Activated naive CD4-positive, alpha-beta T cell treated with anti-CD3 and anti-CD28 coated beads, Interleukin-2, amount 10 ng/mL, durations not matched to agents 7 days and 5 days (primary cell): ENCODE measurements at regions of chr6 and their contacts with region 1.

Region 1: DNA sequence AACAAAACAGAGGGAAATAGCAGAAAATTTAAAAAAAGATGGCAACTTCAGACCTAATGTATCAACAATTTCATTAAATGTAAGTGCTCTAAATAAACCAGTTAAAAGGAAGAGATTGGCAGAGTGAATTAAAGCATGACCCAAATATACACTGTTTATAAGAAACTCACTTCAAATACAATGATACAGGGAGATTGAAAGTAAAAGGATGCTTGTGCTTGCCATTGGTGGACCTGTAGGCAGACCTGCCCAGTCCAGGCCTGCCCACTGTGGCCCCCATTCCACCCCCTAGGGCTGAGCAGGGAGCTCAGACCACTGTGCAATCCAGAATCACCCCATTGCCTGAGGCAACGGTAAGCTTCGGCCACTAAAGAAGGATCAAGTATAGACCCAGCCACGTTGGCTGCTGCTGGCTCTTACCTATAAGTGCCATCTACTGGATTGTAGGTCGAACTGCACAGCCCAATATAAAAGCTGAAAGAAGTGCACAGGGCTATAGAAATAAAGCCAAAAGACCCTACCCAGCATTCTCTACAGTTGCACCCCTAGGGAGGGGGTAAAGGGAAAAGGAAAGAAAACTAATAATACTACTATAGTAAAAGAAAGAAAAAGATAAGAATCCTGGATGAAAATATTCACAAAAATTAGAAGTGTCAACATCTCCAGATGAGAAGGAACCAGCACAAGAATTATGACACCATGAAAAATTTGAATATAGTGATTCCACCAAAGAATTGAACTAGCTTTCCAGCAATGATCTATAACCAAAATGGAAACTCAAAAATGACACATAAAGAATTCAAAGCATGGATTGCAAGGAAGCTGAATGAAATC is 36.1 kb downstream of the PSMB1 start:
- DNase-seq: peak; percentile 52
- H3K4me3 Mint-ChIP-seq: peak overlapping the region; percentile 8
- H3K27ac Mint-ChIP-seq: no peak overlapping the region
- H3K4me1 Mint-ChIP-seq: peaks cover 4% of the 10 kb centered on the region
- H3K27me3 Mint-ChIP-seq: peaks cover 28% of the 10 kb centered on the region

Region 2: DNA sequence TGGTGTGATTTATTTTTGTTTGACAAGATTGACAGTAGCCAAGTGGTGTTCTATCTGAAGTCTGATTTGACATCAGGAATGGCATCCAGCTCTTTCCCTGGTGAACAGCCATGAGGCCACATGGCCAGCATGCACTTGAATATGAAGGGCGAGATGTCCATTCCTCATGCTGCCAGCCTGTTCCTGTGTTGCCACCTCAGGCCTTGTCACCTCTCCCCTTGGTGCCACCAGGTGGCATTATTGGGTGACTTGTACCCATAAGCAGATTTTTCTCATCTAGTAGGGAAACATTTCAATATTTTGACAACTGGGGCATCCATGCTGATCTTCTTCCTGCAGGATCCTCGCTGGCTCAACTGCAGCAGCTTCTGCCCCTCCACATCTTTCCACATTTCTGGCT is 566.4 kb before region 1 on chr6:
- CTCF ChIA-PET with region 1: interaction called, 19 read pairs
- DNase-seq: peak; percentile 55
- H3K4me3 Mint-ChIP-seq: no peak overlapping the region
- H3K27ac Mint-ChIP-seq: no peak overlapping the region
- H3K4me1 Mint-ChIP-seq: peaks cover 4% of the 10 kb centered on the region
- H3K27me3 Mint-ChIP-seq: peaks cover 12% of the 10 kb centered on the region

Region 3: DNA sequence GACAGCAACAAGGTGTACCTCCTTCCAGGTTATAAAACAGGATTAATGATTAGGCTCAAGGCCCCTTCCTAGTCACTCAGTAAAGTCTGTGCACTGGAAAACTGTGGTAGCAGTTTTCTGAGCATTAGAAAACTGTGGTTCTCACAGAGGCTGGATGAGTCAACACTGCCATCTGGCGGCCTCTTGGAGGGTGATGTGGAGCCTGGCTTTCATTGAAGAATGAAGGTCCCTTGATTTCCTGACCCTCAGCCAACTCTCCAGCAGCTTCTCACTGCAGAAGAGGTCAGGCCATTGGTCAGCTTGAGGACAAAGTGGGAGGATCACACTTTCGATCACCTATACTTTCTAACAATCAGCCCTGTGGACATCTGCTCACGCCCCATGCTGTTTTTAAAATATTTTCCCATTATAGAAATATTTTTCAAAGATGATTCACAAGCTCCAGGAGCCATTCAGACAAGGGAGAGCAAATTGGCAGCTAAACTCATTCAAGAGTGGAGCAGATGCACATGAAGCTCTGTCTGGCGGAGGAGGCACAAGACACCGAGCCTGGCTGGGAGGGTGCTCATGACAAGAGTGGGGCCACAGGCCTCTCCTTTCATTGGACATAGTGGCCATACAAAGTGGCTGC is 13.0 kb after region 1 on chr6:
- CTCF ChIA-PET with region 1: interaction called, 13 read pairs
- DNase-seq: peak; percentile 77
- H3K4me3 Mint-ChIP-seq: no peak overlapping the region
- H3K27ac Mint-ChIP-seq: no peak overlapping the region
- H3K4me1 Mint-ChIP-seq: peaks cover 10% of the 10 kb centered on the region
- H3K27me3 Mint-ChIP-seq: peaks cover 3% of the 10 kb centered on the region

Region 4: DNA sequence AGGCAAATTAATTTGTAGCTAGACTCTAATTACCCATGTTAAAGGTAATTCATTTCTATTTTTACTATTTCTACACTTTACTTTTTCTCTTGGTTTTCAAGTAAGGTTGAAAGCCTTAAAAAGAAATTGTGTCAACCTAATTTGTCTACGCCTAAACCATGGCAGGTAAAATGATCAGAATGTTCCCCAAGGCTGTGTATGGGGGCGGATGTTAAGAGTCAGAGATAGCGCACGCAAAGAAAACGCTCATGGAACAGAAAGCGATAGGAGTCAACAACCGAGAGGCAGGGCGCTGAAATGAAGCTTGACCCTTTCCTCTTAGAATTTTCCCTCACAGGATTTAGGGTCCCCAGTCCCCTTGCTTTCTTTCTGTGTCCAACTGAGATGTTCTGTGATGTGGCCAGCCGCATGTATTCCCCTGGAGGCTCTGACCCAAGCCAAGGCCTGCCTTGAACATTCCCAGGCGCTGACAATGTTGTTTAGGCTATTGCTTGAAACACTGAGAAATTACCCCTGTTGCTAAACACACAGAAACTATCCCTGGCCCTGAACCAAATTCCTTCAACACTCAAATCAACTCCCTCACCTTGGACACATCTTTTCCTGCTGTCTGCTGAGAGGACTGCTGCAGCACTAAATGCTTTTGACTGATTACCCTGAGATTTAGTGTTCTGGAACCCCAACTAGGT is 25.2 kb after region 1 on chr6:
- CTCF ChIA-PET with region 1: no interaction called
- DNase-seq: no peak
- H3K4me3 Mint-ChIP-seq: no peak overlapping the region
- H3K27ac Mint-ChIP-seq: peak overlapping the region; percentile 37
- H3K4me1 Mint-ChIP-seq: no peaks in the 10 kb centered on the region
- H3K27me3 Mint-ChIP-seq: no peaks in the 10 kb centered on the region

Region 5: GRCh38 chr6:170596426-170596825 is 79.4 kb after region 1 on chr6:
- CTCF ChIA-PET with region 1: no interaction called
- DNase-seq: no peak
- H3K4me3 Mint-ChIP-seq: no peak overlapping the region
- H3K27ac Mint-ChIP-seq: no peak overlapping the region
- H3K4me1 Mint-ChIP-seq: no peaks in the 10 kb centered on the region
- H3K27me3 Mint-ChIP-seq: peaks cover 27% of the 10 kb centered on the region